A549 (cell line): ENCODE measurements at regions of chr17 and their contacts with region 1.

Region 1: DNA sequence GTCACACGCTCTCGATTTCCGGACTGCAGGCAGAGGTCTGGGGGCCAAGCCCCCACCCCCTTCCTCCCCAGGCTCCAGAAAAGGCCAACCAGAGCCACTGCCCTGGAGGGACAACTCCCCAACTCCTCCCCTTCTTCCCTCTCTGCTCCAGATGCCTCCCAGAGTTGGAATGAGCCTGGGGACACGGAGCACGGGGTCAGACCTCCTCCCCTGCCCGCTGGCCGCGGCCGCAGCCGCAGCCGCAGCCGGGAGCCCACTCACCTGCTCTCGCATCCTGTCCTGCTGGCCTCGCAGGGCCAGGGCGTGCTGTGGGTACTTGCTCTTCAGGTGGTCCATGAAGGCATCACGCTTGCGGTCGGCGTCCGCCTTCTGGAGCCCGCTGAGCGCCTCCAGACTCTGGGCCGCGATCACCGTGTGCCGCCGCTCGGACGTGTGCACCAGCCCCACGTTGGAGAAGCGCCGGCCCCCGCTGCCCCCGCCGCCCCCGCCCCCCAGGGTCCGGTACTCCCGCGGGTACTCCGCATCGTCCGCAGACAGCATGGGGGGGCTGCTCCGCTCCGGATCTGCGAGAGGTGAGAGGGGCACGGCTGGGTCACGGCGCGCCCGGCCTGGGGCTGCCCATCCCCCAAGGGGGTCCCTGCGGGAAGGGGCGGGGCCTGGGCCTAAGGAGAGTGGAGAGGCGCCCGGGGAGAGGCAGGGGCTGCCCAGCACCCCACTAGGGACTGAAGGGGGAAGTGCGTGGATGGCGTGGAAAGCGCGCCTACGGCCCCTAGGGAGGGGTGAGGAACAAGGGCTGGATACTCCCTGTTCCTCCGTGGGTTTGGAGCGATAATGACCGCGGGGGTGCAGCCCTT is 27.3 kb downstream of the SRCIN1 start:
- DNase-seq: no peak
- ATAC-seq: no peak
- H3K4me3 ChIP-seq: no peak overlapping the region
- H3K27ac ChIP-seq: no peak overlapping the region
- H3K4me1 ChIP-seq: peaks cover 8% of the 10 kb centered on the region
- CTCF ChIP-seq: no peak
- EP300 ChIP-seq: no peak
- POLR2A ChIP-seq: no peak
- RAD21 ChIP-seq: no peak

Region 2: DNA sequence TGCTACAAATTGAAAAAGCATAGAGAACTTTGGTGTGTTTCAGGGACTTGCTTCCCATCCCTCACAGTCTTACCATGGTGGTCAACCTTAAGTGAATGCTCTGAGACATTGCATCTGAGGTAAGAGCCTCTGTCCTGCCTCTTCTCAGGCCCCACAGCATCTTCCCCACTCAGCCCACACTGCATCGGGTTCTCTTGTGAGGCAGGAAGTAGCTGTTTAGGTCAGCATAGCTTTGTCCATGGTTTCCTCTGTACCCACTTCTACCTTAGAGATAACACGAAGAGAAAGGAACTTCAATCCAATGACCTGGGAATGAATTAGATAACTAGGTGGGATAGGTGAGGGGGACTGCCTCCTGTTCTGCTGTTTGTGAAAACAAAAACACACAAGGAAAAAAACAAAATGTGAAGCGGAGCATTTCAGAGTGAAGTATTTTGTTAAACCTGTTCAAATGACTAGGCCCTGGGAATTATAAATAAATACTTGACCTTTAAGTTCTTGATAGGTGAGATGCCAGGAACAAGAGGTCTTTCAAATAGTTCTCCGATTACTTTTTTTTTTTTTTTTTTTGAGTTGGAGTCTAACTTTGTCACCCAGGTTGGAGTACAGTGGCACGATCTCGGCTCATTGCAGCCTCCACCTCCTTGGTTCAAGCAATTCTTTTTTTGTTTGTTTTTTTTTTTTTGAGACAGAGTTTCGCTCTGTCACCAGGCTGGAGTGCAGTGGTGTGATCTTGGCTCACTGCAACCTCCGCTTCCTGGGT is 209.2 kb before region 1 on chr17:
- CTCF ChIA-PET with region 1: no interaction called
- POLR2A ChIA-PET with region 1: no interaction called
- DNase-seq: no peak
- ATAC-seq: no peak
- H3K4me3 ChIP-seq: no peak overlapping the region
- H3K27ac ChIP-seq: no peak overlapping the region
- H3K4me1 ChIP-seq: no peaks in the 10 kb centered on the region
- CTCF ChIP-seq: no peak
- EP300 ChIP-seq: no peak
- POLR2A ChIP-seq: no peak
- RAD21 ChIP-seq: no peak

Region 3: DNA sequence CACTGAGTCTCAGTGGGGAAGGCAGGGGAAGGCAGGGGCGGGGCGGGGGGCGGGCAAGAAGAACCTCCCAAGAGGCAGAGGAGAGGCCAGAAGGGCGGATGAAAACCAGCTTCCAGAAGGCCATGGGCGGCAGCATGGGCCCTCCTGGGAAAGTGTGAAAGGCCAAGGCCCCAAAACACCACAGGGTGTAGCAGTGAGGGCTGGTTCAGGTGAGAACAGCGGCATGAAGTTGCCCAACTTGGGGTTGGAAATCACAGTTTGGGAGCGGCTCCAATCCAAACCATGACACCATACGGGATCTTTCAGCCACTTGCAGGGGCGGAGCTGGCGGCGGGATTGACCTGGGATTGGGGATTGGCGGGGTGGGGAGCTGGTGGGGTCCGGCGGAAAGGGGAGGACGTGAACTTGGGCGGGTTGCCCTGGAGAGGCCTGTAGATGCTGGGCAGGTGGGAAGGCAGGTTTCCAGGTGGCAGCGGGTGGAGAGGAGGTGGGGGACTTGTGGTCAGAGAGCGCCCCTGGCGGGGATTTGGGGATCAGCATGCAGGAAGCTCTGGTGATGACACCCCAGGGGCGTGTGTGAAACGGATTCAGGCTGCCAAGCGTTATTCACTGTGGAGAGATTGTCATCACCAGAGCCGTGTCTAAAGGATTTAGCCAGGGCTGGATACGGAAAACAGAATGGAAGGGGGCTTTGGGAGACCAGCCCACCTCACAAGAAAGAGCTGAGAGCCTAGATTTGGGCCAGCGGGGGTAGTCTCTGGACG is 69.3 kb before region 1 on chr17:
- CTCF ChIA-PET with region 1: interaction called, 11 read pairs
- POLR2A ChIA-PET with region 1: no interaction called
- DNase-seq: peak; percentile 86 to 97
- ATAC-seq: peak; percentile 67 to 86
- H3K4me3 ChIP-seq: no peak overlapping the region
- H3K27ac ChIP-seq: no peak overlapping the region
- H3K4me1 ChIP-seq: peaks cover 19% of the 10 kb centered on the region
- CTCF ChIP-seq: peak; percentile 66
- EP300 ChIP-seq: no peak
- POLR2A ChIP-seq: no peak
- RAD21 ChIP-seq: peak; percentile 39 to 66; a peak in 4 of 5 replicates

Region 4: GRCh38 chr17:38564869-38565268 is 13.6 kb before region 1 on chr17:
- CTCF ChIA-PET with region 1: interaction called, 948 read pairs
- POLR2A ChIA-PET with region 1: interaction called, 4 read pairs
- DNase-seq: no peak
- ATAC-seq: no peak
- H3K4me3 ChIP-seq: no peak overlapping the region
- H3K27ac ChIP-seq: no peak overlapping the region
- H3K4me1 ChIP-seq: peaks cover 4% of the 10 kb centered on the region
- CTCF ChIP-seq: no peak
- EP300 ChIP-seq: no peak
- POLR2A ChIP-seq: no peak
- RAD21 ChIP-seq: no peak